A673 (cell line): ENCODE measurements at regions of chr9 and their contacts with region 1.

Region 1: GRCh38 chr9:73380411-73380810 is 228.7 kb downstream of the ANXA1 start:
- DNase-seq: no peak
- H3K4me3 ChIP-seq: no peak overlapping the region
- H3K27ac ChIP-seq: no peak overlapping the region
- H3K4me1 ChIP-seq: no peaks in the 10 kb centered on the region
- H3K27me3 ChIP-seq: peaks cover 25% of the 10 kb centered on the region
- CTCF ChIP-seq: no peak

Region 2: DNA sequence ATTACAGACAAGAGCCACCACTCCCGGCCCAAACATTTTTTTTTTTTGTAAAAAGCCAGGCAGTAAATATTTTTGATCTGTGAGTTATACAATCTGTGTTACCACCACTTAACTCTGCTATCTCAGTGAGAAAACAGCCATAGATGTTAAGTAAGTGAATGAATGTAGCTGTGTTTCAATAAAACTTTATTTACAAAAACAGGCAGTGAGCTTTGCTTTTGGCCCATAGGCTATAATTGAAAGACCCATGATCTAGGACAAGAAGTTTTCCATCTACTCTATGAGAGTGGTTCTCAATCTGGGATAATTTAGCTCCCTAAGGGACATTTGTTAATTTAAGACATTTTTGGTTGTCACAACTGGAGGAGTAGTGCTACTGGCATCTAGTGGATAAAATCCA is 768.0 kb before region 1 on chr9:
- CTCF ChIA-PET with region 1: interaction called, 13 read pairs
- POLR2A ChIA-PET with region 1: no interaction called
- intact Hi-C with region 1: no loop called
- DNase-seq: no peak
- H3K4me3 ChIP-seq: no peak overlapping the region
- H3K27ac ChIP-seq: no peak overlapping the region
- H3K4me1 ChIP-seq: no peaks in the 10 kb centered on the region
- H3K27me3 ChIP-seq: no peaks in the 10 kb centered on the region
- CTCF ChIP-seq: no peak